Activated T-helper 1 cell treated with anti-CD3 and anti-CD28 coated beads, Interleukin-12 subunit alpha, Interleukin-12 subunit beta, Interleukin-2, Interleukin-4 antibody, amounts not matched to agents 30 ng/mL and 10 ng/mL and 1 ng/mL, durations not matched to agents 14 hours and 24 hours and 36 hours (primary cell): ENCODE measurements at regions of chr19 and their contacts with region 1.

Region 1: DNA sequence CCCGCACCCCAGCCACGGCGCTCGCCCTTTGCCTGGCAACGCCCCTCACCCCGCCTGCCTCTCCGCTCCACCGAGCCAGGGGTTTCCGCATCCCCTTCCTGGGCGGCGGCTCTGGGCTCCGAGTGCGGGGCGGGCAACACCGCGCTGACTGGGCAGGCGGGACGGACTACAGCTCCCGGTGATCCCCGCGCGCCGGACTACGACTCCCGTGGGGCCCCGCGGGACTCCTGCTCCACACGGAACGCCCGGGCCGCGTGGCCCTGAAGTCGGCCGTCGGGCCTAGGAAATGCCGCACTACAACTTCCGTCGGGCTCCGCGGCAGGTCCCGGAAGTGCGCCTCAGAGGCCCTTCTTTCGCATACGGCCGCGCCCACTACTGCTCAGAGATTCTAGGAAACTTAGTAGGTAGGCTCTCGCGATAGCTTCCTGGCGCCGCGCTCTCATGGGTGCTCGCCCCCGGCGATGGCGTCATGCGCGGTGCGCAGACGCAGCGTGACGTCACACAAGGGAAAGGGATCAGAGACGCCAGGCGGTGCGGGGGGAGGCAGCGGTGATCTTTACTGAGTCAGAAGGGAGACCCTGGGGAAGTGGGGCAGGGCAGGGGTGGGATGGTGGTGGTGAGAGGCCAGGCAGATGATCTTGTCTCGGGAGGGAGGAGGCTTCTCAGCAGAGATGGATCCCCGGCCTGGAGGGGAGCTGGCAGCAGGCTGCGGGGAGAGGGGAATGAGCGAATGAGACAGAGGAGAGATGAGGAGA is at the start of gene JOSD2:
- DNase-seq: peak; percentile 97
- H3K4me3 Mint-ChIP-seq: peak within 1 kb of the TSS; percentile 96
- H3K27ac Mint-ChIP-seq: peak within 1 kb of the TSS; percentile 99
- H3K4me1 Mint-ChIP-seq: peaks cover 18% of the 10 kb centered on the region
- H3K27me3 Mint-ChIP-seq: peaks cover 10% of the 10 kb centered on the region
- total RNA-seq, gene JOSD2: 38.5 and 41.7 TPM in 2 replicates

Region 2: DNA sequence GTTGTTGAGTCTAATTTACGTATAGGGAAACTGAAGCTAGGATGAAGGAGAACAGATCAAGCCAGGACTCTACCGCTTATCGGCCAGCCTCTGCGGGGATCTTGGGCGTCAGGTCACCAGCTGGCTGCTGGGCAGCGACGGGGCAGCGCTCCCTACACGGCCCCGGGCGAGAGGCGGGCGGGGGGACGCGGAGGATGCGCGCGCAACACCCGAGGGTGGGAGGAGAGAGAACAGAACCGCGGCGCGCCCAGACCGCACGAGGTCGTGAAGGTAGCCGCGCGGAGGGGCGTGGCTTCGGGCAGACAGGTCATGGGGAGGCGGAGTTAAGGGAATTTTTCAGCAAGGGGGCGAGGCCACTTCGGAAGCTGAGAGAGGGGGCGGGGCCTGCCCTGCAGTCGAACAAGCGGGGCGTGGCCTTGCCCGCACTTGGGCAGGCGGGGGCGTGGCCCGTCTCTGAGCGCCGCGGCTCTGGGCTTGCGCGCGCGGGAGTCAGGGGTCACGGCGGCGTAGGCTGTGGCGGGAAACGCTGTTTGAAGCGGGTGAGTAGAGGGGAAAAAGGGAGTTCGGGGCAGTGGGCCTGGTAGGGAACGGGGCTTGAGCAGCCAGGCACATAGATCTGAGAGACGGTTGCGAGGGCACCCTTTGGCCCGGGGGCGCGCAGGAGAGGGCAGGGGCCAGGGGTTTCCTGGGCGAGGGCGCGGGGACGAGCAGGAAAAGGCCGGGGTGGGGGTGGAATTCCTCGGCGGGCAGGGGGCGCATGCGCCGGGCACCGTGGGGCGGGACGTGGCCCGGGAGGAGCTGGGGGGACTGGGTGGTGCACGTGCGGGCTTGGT is 127.2 kb before region 1 on chr19 and contains the start of gene POLD1:
- intact Hi-C with region 1: loop called (anchors 1 kb)
- DNase-seq: peak; percentile 99
- H3K4me3 Mint-ChIP-seq: peak within 1 kb of the TSS; percentile 91
- H3K27ac Mint-ChIP-seq: peak within 1 kb of the TSS; percentile 96
- H3K4me1 Mint-ChIP-seq: peaks cover 28% of the 10 kb centered on the region
- H3K27me3 Mint-ChIP-seq: no peaks in the 10 kb centered on the region
- total RNA-seq, gene POLD1: 171 and 178 TPM in 2 replicates

Region 3: GRCh38 chr19:50447750-50448149 is 63.5 kb before region 1 on chr19:
- intact Hi-C with region 1: no loop called
- DNase-seq: no peak
- H3K4me3 Mint-ChIP-seq: no peak overlapping the region
- H3K27ac Mint-ChIP-seq: no peak overlapping the region
- H3K4me1 Mint-ChIP-seq: no peaks in the 10 kb centered on the region
- H3K27me3 Mint-ChIP-seq: peaks cover 3% of the 10 kb centered on the region

Region 4: DNA sequence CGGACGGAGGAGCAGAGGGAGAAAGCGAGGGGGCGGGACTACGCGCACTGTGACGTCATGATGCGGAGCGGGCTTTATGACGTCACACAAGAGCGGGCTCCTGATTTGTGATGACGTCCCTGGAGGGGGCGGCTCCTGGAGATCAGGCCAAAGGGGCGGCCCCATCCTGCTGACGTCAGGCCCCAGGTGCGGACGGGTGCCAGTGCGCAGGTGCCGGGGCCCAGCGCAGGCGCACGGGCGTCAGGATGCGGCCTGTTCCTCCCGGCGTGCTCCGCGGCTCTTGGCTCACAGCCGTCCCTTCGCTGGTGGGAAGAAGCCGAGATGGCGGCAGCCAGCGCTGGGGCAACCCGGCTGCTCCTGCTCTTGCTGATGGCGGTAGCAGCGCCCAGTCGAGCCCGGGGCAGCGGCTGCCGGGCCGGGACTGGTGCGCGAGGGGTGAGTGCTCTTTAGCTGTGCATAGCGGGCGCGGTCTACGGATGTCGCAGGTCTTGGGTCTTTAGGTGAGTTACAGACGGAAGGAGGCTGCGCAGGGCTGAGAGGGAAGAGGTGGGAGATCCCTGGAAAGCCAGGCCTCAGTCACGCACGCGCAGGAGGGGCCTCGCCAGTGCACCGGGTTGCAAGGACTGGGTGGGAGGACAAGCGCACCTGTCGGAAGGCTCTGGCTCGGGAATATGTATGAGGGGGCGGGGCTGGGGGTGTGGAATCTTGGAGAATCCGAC is 34.9 kb before region 1 on chr19 and contains the starts of genes EMC10 and GARIN5A:
- intact Hi-C with region 1: loop called (anchors 1 kb)
- DNase-seq: peak; percentile 92
- H3K4me3 Mint-ChIP-seq: peak within 1 kb of the TSS; percentile 91
- H3K27ac Mint-ChIP-seq: peak within 1 kb of the TSS; percentile 72
- H3K4me1 Mint-ChIP-seq: peaks cover 20% of the 10 kb centered on the region
- H3K27me3 Mint-ChIP-seq: no peaks in the 10 kb centered on the region
- total RNA-seq, gene EMC10: 90.0 and 95.4 TPM in 2 replicates
- total RNA-seq, gene GARIN5A: 0.39 and 0.88 TPM in 2 replicates

Region 5: DNA sequence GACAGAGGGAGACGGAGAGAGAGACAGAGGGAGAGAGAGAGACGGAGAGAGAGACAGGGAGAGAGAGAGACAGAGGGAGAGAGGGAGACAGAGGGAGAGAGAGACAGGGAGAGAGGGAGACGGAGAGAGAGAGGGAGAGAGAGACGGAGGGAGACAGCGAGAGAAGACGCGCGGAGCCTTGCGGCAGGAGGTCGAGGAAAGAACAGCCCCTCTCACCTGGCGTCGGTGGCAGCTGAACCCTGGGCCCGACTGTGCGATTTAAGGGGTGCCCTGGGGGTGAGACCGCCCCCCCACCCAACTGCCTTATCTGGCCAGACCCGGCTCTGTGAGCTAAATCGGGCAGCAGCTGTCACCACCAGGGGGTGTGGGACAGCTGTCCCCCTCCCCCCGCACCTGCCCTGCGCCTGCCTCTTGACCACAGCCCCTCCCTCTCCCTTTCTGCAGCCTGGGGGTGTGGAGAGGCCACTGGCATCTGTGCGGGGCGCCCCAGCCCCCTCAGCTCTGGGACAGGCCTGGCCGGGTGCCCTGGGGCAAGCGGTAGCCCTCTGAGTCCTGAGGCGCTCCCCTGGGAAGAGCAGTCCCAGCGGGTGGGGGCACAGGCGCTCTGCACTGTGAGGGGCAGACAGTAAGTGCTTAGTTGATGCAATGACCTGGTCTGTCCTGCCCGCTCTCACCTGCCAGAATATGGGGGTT is 11.0 kb before region 1 on chr19:
- intact Hi-C with region 1: no loop called
- DNase-seq: no peak
- H3K4me3 Mint-ChIP-seq: no peak overlapping the region
- H3K27ac Mint-ChIP-seq: no peak overlapping the region
- H3K4me1 Mint-ChIP-seq: no peaks in the 10 kb centered on the region
- H3K27me3 Mint-ChIP-seq: no peaks in the 10 kb centered on the region

Region 6: DNA sequence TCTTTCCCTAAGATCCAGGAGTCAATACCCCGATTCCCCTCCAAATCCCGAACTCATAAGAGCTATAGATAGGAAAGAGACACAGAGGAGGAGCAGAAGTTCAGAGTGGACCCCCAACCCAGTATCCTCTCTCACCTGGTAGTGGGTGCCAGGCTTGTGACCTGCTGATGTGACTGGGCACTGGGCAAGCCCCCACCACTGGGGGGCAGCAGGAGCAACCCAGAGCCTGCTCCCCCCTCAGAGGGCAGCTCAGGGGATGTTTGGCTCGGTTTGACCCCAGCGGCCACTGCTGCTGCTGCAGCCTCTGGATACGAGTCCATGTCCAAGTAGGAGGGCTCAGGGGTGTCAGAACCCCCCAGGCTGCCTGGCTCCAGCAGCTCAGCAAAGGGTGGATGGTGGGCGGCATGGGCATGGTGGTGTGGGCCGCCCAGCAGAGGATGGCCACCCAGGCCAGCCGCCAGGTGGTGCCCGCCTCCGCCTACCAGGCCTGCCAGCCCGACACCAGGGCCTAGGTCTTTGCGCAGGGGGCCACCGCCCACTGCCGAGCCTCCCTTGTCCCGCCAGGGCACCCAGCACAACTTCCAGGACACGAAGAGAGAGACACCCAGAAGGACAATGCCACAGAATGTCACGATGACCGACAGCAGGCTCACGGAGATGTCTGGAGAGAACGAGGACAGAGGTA is 121.0 kb after region 1 on chr19:
- intact Hi-C with region 1: no loop called
- DNase-seq: no peak
- H3K4me3 Mint-ChIP-seq: no peak overlapping the region
- H3K27ac Mint-ChIP-seq: no peak overlapping the region
- H3K4me1 Mint-ChIP-seq: no peaks in the 10 kb centered on the region
- H3K27me3 Mint-ChIP-seq: peaks cover 3% of the 10 kb centered on the region

Region 7: GRCh38 chr19:50651174-50651573 is 139.9 kb after region 1 on chr19:
- intact Hi-C with region 1: no loop called
- DNase-seq: no peak
- H3K4me3 Mint-ChIP-seq: no peak overlapping the region
- H3K27ac Mint-ChIP-seq: no peak overlapping the region
- H3K4me1 Mint-ChIP-seq: no peaks in the 10 kb centered on the region
- H3K27me3 Mint-ChIP-seq: peaks cover 7% of the 10 kb centered on the region

Region 8: GRCh38 chr19:50724522-50725217 is 213.4 kb after region 1 on chr19:
- intact Hi-C with region 1: loop called (anchors 1 kb)
- DNase-seq: peak; percentile 97
- H3K4me3 Mint-ChIP-seq: peak overlapping the region; percentile 85
- H3K27ac Mint-ChIP-seq: peak overlapping the region; percentile 78
- H3K4me1 Mint-ChIP-seq: no peaks in the 10 kb centered on the region
- H3K27me3 Mint-ChIP-seq: peaks cover 38% of the 10 kb centered on the region